OCI-LY7 (cell line): ENCODE measurements at regions of chr2 and their contacts with region 1.

Region 1: GRCh38 chr2:215920244-215921100 is 92.9 kb downstream of the MREG start:
- DNase-seq: peak; percentile 62
- H3K4me3 ChIP-seq: no peak overlapping the region
- H3K27ac ChIP-seq: no peak overlapping the region
- H3K4me1 ChIP-seq: no peaks in the 10 kb centered on the region
- CTCF ChIP-seq: peak; percentile 92

Region 2: GRCh38 chr2:215454519-215455246 is 465.8 kb before region 1 on chr2:
- CTCF ChIA-PET with region 1: no interaction called
- POLR2A ChIA-PET with region 1: no interaction called
- intact Hi-C with region 1: loop called (anchors 1 kb)
- DNase-seq: peak; percentile 33
- H3K4me3 ChIP-seq: no peak overlapping the region
- H3K27ac ChIP-seq: no peak overlapping the region
- H3K4me1 ChIP-seq: no peaks in the 10 kb centered on the region
- CTCF ChIP-seq: peak; percentile 86

Region 3: DNA sequence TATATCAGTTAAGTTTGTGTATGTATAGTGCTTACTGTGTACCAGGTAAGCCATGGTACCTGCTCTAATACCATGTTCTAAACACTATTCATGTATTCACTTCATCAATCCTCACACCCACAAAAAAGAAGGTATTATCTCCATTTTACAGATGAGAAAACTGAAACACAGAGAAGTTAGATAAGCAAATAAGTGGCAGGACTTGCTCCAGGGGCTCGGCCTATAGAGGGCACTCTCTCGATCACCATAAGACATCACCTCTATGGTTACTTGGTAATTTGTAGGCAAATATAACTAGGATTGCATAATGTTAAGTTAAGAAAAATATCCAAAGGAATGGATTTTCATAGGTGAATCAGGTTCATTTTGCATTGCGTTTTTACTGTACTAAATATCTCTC is 366.5 kb before region 1 on chr2:
- CTCF ChIA-PET with region 1: no interaction called
- POLR2A ChIA-PET with region 1: no interaction called
- intact Hi-C with region 1: loop called (anchors 10 kb)
- DNase-seq: peak; percentile 2
- H3K4me3 ChIP-seq: no peak overlapping the region
- H3K27ac ChIP-seq: no peak overlapping the region
- H3K4me1 ChIP-seq: no peaks in the 10 kb centered on the region
- CTCF ChIP-seq: peak; percentile 71

Region 4: GRCh38 chr2:215796140-215796855 is 124.2 kb before region 1 on chr2:
- CTCF ChIA-PET with region 1: no interaction called
- POLR2A ChIA-PET with region 1: no interaction called
- intact Hi-C with region 1: loop called (anchors 5 kb)
- DNase-seq: no peak
- H3K4me3 ChIP-seq: no peak overlapping the region
- H3K27ac ChIP-seq: no peak overlapping the region
- H3K4me1 ChIP-seq: no peaks in the 10 kb centered on the region
- CTCF ChIP-seq: no peak

Region 5: DNA sequence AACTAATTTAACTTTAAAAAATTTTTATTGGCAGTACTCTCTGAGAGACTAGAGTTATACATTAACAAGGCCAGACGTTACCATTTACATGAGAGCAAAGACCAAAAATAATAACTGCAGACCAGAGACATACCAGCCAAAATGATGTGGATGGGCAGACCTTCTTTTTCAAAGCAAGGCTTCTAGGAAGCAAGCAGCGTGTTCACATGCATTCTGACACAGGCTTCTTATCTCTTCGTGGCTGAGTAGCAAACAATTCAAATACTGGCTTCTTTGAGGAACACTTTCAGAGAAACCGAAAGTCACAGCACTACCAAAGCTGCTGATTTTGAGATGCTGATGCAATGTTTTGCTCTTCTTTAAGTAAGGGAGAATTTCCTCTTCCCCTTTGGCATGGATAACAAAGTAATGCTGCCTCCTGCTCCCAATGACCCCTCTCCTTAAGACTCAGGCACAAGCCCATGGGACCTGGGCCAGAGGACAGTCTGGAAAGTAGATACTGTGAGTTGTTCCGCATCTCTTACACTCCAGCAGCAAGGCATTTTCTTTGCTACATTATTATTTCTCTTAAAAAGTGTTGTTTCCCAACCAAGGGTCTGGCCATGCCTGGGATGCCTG is 89.1 kb before region 1 on chr2:
- CTCF ChIA-PET with region 1: no interaction called
- POLR2A ChIA-PET with region 1: no interaction called
- intact Hi-C with region 1: no loop called
- DNase-seq: peak; percentile 40
- H3K4me3 ChIP-seq: no peak overlapping the region
- H3K27ac ChIP-seq: no peak overlapping the region
- H3K4me1 ChIP-seq: no peaks in the 10 kb centered on the region
- CTCF ChIP-seq: no peak